ENCODE measurements at regions of chr16 and their contacts with region 1.

Region 1: DNA sequence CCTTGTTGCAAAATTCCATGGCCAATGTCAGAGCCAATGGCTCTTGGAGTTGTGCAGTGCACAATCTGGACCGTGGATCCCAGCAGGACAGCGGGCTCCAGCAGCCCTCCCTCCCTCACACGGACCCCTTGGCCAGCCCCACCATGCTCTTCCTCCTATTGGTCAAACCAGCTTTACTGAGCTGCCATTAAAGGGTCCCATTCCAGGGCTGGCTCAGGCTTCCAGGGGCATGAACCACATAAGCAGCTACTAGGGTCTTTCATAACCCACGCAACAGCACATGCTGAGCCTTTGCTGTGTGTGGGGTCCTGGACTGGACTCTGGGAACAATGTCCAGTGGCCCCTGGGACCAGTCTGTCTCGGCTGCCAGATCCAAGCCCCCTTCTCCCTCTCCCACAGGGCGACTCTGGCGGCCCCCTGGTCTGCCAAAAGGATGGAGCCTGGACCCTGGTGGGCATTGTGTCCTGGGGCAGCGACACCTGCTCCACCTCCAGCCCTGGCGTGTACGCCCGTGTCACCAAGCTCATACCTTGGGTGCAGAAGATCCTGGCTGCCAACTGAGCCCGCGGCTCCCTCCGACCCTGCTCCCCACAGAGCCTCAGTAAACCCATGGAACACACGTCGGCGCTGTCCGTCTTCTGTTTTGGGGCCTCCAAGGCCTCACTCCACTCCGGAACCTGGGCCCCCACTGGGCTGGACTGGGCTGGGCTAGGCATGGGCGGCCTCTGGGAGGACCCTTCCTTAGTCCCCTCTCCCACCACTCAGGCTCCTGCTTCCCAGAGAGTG is 5.7 kb downstream of the CTRB1 start:
- DNase-seq: no peak
- H3K4me3 ChIP-seq: no peak overlapping the region
- H3K27ac ChIP-seq: no peak overlapping the region
- H3K4me1 ChIP-seq: no peaks in the 10 kb centered on the region
- H3K27me3 ChIP-seq: no peaks in the 10 kb centered on the region
- CTCF ChIP-seq: no peak

Region 2: DNA sequence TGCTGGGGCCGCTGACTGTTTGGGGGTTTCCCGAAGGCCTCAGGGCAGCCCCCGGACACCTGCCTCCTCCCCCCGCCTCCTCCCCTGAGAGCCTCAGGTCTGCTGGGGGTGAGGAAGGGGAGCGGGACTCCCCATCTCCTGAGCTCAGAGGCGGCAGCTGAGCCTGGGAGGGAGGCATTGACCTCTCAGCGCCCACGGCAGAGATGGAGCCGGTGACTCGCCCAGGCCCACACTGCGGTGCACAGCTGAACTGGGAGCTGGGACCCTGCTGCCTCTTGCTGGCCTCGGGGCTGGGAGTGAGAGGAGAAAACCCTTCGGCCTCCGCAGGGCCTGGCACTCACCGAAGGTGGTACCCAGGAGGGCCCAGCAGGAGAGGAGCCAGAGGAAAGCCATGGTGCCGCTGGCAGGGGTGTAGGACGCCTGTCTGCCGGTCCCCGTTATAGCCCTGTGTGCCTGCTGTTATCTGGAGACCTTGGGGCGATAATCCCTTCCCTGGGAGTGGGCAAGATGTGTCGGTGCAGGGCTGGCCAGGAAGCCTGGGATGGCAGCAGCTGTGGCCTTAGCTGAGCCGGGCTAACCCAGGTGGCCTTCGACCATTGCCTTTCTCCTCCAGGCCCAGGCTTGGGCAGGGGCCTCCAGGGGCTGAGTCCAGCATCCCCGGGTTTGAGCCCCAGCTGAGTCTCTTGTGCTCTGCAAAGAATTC is 17.6 kb before region 1 on chr16 and contains the start of gene CTRB2:
- intact Hi-C with region 1: loop called (anchors 2 kb)
- DNase-seq: no peak
- H3K4me3 ChIP-seq: no peak within 1 kb of the TSS
- H3K27ac ChIP-seq: no peak within 1 kb of the TSS
- H3K4me1 ChIP-seq: no peaks in the 10 kb centered on the region
- H3K27me3 ChIP-seq: no peaks in the 10 kb centered on the region
- CTCF ChIP-seq: no peak
- total RNA-seq, gene CTRB2: not detected